Prostate gland (tissue), 2 donors: ENCODE measurements at regions of chr4 and their contacts with region 1.

Region 1: GRCh38 chr4:75673027-75673958 is at the start of gene G3BP2:
- DNase-seq: peak; percentile 97
- H3K4me3 ChIP-seq: peak within 1 kb of the TSS; percentile 80
- H3K27ac ChIP-seq: peak within 1 kb of the TSS; percentile 95 to 97
- H3K4me1 ChIP-seq: peaks cover 4% of the 10 kb centered on the region
- H3K27me3 ChIP-seq: no peaks in the 10 kb centered on the region
- CTCF ChIP-seq: peak in 1 of 4 experiments; percentile 3
- POLR2A ChIP-seq: peak; percentile 92
- total RNA-seq, gene G3BP2: 95.0 to 121 TPM

Region 2: GRCh38 chr4:75733369-75733768 is 60.1 kb after region 1 on chr4:
- intact Hi-C with region 1: no loop called
- DNase-seq: no peak
- H3K4me3 ChIP-seq: no peak overlapping the region
- H3K27ac ChIP-seq: no peak overlapping the region
- H3K4me1 ChIP-seq: no peaks in the 10 kb centered on the region
- H3K27me3 ChIP-seq: no peaks in the 10 kb centered on the region
- CTCF ChIP-seq: no peak
- POLR2A ChIP-seq: no peak

Region 3: DNA sequence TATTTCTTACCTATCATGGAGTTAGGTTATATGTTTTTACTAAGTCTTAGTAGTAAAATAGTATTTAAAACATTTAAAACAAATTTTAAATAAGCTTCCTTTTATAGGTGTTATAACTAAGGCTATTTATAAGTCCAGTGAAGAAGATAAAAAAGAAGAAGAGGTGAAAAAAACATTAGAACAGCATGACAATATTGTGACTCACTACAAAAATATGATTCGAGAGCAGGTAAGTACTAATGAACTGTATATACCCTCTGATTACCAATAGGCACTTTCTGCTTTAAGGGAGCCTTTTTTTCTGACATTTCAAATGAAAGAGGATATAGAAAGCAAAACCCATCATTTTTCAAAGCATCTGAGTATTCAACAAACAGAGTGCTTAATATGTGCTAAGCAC is 127.7 kb after region 1 on chr4:
- intact Hi-C with region 1: loop called (anchors 5 kb)
- DNase-seq: no peak
- H3K4me3 ChIP-seq: no peak overlapping the region
- H3K27ac ChIP-seq: no peak overlapping the region
- H3K4me1 ChIP-seq: no peaks in the 10 kb centered on the region
- H3K27me3 ChIP-seq: no peaks in the 10 kb centered on the region
- CTCF ChIP-seq: no peak
- POLR2A ChIP-seq: no peak

Region 4: DNA sequence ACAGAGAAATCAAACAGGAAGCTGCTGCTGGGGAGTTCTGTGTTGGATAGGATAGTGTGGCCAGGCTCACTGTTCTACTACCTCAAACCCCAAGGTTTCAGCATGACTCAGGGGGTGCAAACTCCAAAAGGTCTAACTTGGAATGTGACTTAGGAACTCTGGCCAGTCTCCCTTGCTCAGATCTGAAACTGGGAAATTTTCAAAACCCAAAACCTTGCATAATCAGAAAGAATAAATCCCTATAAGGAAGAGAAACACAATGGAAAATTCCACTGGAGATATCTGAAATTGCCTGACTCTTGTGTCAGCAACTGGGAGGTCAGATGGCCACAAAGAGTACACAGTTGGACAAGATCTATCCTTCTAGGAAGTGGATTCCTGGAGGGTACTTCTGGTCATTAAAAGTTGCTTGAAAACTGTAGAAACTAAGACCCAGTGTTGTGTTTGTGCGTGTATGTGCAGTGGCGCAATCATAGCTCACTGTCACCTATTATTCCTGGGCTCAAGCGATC is 170.9 kb after region 1 on chr4:
- intact Hi-C with region 1: loop called (anchors 10 kb)
- DNase-seq: no peak
- H3K4me3 ChIP-seq: no peak overlapping the region
- H3K27ac ChIP-seq: peak overlapping the region in 1 of 2 donors; percentile 27
- H3K4me1 ChIP-seq: no peaks in the 10 kb centered on the region
- H3K27me3 ChIP-seq: no peaks in the 10 kb centered on the region
- CTCF ChIP-seq: no peak
- POLR2A ChIP-seq: no peak